ENCODE measurements at regions of chr4 and their contacts with region 1.

Region 1: DNA sequence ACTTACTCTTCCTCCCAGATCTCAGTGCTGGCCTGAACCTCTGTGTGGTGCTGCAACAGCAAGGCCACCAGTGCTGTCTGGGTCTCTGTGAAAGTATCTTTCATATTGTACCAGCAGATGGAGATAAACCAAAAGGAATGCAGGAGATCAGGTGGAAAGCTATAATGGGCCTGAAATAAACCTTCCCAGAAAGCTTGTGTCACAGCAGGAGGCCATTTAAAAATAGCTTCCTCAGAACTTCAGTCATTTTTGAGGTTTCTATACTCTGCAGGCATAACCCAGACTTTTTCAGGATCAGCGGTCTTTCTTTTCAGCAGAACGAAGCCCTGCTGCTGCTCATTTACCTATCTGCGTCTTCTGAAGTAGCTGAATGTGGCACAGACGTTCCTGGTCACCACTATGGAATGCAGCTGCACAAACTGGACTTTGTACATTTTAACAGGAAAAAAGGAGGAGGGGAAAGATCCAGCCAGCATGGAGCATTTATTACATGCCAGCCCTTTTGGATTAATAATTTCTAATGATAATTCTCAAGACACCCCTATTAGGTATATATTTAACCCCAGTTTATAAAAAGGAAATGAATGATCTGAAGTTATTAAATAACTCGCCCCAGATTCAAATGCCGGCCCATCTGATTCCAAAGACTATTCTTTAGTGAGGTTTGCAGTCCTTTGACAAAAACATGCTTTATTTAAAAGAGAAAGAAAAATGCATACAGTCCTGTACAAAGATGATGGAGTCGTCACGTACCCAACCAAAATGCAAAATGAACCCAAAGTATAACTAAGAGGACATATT is 119.7 kb downstream of the NFKB1 start:
- DNase-seq: peak; percentile 66
- H3K4me3 ChIP-seq: peak overlapping the region; percentile 44
- CTCF ChIP-seq: peak; percentile 52

Region 2: GRCh38 chr4:101871962-101872690 is 748.8 kb before region 1 on chr4:
- CTCF ChIA-PET with region 1: no interaction called
- POLR2A ChIA-PET with region 1: no interaction called
- DNase-seq: no peak
- H3K4me3 ChIP-seq: no peak overlapping the region
- CTCF ChIP-seq: no peak

Region 3: GRCh38 chr4:102610007-102610406 is 10.9 kb before region 1 on chr4:
- CTCF ChIA-PET with region 1: interaction called, 31 read pairs
- POLR2A ChIA-PET with region 1: no interaction called
- DNase-seq: no peak
- H3K4me3 ChIP-seq: no peak overlapping the region
- CTCF ChIP-seq: peak; percentile 26

Region 4: GRCh38 chr4:102815981-102816380 is 195.1 kb after region 1 on chr4:
- CTCF ChIA-PET with region 1: interaction called, 10 read pairs
- POLR2A ChIA-PET with region 1: interaction called, 7 read pairs
- DNase-seq: peak; percentile 53
- H3K4me3 ChIP-seq: no peak overlapping the region
- CTCF ChIP-seq: no peak

Region 5: GRCh38 chr4:103008875-103009729 is 388.2 kb after region 1 on chr4:
- CTCF ChIA-PET with region 1: interaction called, 40 read pairs
- POLR2A ChIA-PET with region 1: no interaction called
- DNase-seq: no peak
- H3K4me3 ChIP-seq: no peak overlapping the region
- CTCF ChIP-seq: peak; percentile 62

Region 6: DNA sequence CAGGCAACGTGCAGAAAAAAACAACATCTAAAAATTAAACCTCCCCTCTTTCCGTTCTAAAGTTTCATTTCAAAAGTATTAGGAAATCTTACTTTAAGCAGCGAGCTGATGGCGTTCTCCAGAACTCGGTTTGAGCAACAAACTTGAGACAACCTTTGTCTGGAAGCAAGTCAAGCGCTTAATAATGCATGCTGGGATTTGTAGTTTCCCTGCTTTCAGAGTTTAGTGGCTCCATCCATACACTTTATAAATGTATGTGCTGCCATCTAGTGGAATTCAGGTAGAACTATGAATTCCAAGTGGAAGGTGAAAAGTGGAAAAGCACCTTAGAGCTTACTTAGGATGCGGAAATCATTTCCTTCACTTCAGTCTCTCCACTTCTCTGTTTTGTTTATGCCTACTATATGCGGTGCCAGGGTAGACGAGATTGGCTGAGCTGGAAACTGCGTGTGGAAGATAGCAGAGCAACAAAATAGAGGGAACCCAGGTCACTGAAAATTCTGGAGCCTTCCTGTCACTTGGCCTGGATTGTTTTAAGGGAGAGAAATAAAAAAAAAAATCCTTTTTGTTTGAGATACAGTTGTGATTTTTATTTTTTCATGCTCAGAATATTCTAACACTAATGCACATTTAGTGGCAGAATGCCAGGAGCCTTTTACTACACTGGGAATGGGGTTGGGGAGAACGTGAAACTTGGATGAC is 478.9 kb after region 1 on chr4 and contains the start of gene BDH2:
- CTCF ChIA-PET with region 1: interaction called, 12 read pairs
- POLR2A ChIA-PET with region 1: no interaction called
- DNase-seq: peak; percentile 83
- H3K4me3 ChIP-seq: peak within 1 kb of the TSS; percentile 48
- CTCF ChIP-seq: peak; percentile 36

Measured in AG04449 (cell line).